ENCODE measurements at regions of chr14 and their contacts with region 1.

Region 1: DNA sequence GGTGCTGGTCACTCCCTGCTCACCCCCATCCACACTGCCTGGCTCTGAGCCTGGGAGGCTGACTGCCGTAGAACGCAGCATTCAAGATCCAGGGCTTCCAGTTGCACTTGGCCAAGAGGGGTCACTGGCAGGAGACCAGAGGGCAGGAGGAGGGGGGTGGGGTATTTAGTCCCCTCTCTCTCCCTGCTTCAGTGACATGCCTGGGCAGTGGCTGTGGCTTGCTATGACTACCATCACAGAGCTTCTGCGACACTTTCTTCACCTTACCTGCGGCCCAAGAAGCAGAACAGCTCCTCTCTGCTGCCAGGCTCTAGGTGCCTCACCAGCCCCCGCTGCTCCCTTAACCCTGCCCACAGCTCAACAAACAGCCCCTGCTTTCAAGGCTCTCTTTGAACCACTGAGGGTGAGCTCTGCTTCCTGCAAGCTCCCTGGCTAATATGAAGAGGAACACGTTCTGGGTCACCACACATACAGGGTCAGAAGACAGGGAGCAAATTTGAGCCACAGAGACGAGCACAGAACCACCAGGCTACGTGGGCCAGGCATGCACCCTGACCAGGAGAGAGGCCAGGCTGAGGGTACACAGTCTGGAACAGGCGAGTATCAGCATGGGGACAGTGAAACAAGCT is 55.7 kb downstream of the ITPK1 start:
- DNase-seq: no peak
- H3K4me3 ChIP-seq: no peak overlapping the region
- H3K27ac ChIP-seq: peak overlapping the region; percentile 53 to 90 (median 86)
- H3K4me1 ChIP-seq: peaks cover 0 to 87% (median 86%) of the 10 kb centered on the region in 4 donors
- H3K27me3 ChIP-seq: no peaks in the 10 kb centered on the region
- CTCF ChIP-seq: no peak
- EP300 ChIP-seq: no peak
- POLR2A ChIP-seq: no peak

Region 2: DNA sequence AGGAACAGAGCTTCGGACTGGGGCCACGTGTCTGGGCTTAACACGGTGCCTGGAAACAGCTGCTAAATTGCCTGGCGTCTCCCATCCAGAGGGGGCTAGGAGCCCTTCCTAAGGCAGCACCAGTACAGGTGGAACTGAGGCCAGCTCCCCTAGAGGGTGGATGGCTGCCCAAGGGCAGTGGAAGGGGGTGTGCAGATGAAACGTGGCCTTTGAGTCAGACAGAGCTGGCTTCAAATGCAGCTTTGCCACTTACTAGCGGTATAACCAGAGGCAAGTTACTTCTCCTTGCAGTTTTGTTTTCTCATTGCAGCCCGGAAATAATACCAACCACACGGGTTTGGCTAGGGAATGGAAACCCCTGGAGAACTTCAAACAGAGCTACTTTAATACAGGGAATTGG is 796.4 kb before region 1 on chr14:
- intact Hi-C with region 1: no loop called
- DNase-seq: no peak
- H3K4me3 ChIP-seq: no peak overlapping the region
- H3K27ac ChIP-seq: no peak overlapping the region
- H3K4me1 ChIP-seq: no peaks in the 10 kb centered on the region
- H3K27me3 ChIP-seq: no peaks in the 10 kb centered on the region
- CTCF ChIP-seq: no peak
- EP300 ChIP-seq: no peak
- POLR2A ChIP-seq: no peak

Region 3: GRCh38 chr14:92973261-92973797 is 86.7 kb before region 1 on chr14:
- intact Hi-C with region 1: loop called (anchors 5 kb)
- DNase-seq: peak; percentile 94
- H3K4me3 ChIP-seq: no peak overlapping the region
- H3K27ac ChIP-seq: peak overlapping the region; percentile 77 to 90 (median 85)
- H3K4me1 ChIP-seq: peaks cover 0 to 38% (median 28%) of the 10 kb centered on the region in 4 donors
- H3K27me3 ChIP-seq: no peaks in the 10 kb centered on the region
- CTCF ChIP-seq: peak; percentile 87 to 98 (median 95)
- EP300 ChIP-seq: peak in 3 of 4 donors; percentile 10 to 62 (median 39)
- POLR2A ChIP-seq: no peak

Region 4: GRCh38 chr14:93984987-93985410 is 925.0 kb after region 1 on chr14:
- intact Hi-C with region 1: loop called (anchors 10 kb)
- DNase-seq: peak; percentile 80
- H3K4me3 ChIP-seq: no peak overlapping the region
- H3K27ac ChIP-seq: peak overlapping the region; percentile 77 to 93 (median 89)
- H3K4me1 ChIP-seq: peaks cover 0 to 67% (median 54%) of the 10 kb centered on the region in 4 donors
- H3K27me3 ChIP-seq: no peaks in the 10 kb centered on the region
- CTCF ChIP-seq: peak; percentile 62 to 88 (median 78)
- EP300 ChIP-seq: peak in 3 of 4 donors; percentile 26 to 76 (median 48)
- POLR2A ChIP-seq: no peak

Measured in sigmoid colon (tissue), 7 donors.